ENCODE measurements at regions of chr10 and their contacts with region 1.

Region 1: GRCh38 chr10:63629363-63630084 is 108.3 kb downstream of the REEP3 start:
- DNase-seq: peak; percentile 72
- H3K4me3 Mint-ChIP-seq: peak overlapping the region; percentile 90
- H3K27ac Mint-ChIP-seq: peak overlapping the region; percentile 92
- H3K4me1 Mint-ChIP-seq: peaks cover 40% of the 10 kb centered on the region
- H3K27me3 Mint-ChIP-seq: peaks cover 6% of the 10 kb centered on the region

Region 2: GRCh38 chr10:63217120-63217605 is 412.4 kb before region 1 on chr10:
- intact Hi-C with region 1: loop called (anchors 1 kb)
- DNase-seq: no peak
- H3K4me3 Mint-ChIP-seq: no peak overlapping the region
- H3K27ac Mint-ChIP-seq: no peak overlapping the region
- H3K4me1 Mint-ChIP-seq: peaks cover 39% of the 10 kb centered on the region
- H3K27me3 Mint-ChIP-seq: no peaks in the 10 kb centered on the region

Region 3: GRCh38 chr10:63388421-63389031 is 241.0 kb before region 1 on chr10:
- intact Hi-C with region 1: loop called (anchors 10 kb)
- DNase-seq: no peak
- H3K4me3 Mint-ChIP-seq: peak overlapping the region; percentile 61
- H3K27ac Mint-ChIP-seq: peak overlapping the region; percentile 45
- H3K4me1 Mint-ChIP-seq: peaks cover 42% of the 10 kb centered on the region
- H3K27me3 Mint-ChIP-seq: peaks cover 2% of the 10 kb centered on the region

Region 4: DNA sequence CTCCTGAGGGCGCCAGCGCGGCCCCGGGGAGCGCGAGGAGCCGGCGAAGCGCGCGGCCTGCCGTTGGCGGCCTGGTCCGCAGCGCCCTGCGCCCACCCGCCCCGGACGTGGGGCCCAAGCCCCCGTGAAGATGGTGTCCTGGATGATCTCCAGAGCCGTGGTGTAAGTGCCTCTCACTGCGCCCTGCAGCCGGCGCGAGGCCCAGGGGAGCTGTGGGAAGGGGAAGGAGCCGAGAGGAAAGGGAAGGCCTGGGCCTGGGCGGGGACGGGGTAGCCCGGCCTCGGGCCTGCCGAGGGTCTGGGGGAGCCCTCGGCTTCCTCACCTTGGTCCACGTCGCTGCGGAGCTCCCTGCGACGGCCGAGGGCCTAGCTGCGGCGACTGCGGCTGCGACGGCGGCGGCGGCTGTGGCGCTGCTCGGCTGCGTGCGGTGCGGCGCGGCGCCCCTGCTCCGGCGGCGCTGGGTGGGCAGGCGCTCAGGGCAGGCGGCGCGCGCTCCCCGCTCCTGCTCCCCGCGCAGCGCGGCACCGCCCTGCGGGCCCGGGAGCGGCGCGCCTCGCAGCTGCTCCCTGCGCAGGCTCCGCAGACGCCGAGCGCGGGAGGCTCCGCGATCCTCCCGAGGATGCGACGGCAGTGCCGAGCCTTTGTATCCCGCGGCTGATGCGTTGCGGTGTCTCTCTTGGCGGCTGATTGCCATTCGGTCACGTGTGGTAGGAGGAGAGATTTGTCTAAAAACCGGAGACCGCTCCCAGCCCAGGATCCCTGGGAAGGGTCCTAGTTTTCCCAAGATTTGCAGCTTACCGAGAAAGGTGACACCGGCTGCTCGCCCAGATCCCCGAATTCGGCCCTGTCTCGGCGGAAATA is 107.9 kb before region 1 on chr10:
- intact Hi-C with region 1: loop called (anchors 2 kb)
- DNase-seq: peak; percentile 42
- H3K4me3 Mint-ChIP-seq: peak overlapping the region; percentile 79
- H3K27ac Mint-ChIP-seq: peak overlapping the region; percentile 81
- H3K4me1 Mint-ChIP-seq: peaks cover 51% of the 10 kb centered on the region
- H3K27me3 Mint-ChIP-seq: no peaks in the 10 kb centered on the region

Region 5: GRCh38 chr10:63707254-63707910 is 77.9 kb after region 1 on chr10:
- intact Hi-C with region 1: loop called (anchors 2 kb)
- DNase-seq: no peak
- H3K4me3 Mint-ChIP-seq: no peak overlapping the region
- H3K27ac Mint-ChIP-seq: peak overlapping the region; percentile 37
- H3K4me1 Mint-ChIP-seq: peaks cover 26% of the 10 kb centered on the region
- H3K27me3 Mint-ChIP-seq: peaks cover 2% of the 10 kb centered on the region

Region 6: GRCh38 chr10:63788152-63788821 is 158.8 kb after region 1 on chr10:
- intact Hi-C with region 1: no loop called
- DNase-seq: no peak
- H3K4me3 Mint-ChIP-seq: no peak overlapping the region
- H3K27ac Mint-ChIP-seq: no peak overlapping the region
- H3K4me1 Mint-ChIP-seq: peaks cover 3% of the 10 kb centered on the region
- H3K27me3 Mint-ChIP-seq: peaks cover 10% of the 10 kb centered on the region

Measured in activated T-helper 2 cell treated with anti-CD3 and anti-CD28 coated beads, Interferon-gamma antibody, Interleukin-2, Interleukin-4, amounts not matched to agents 10 μg/mL and 5 μg/mL and 100 μg/mL, durations not matched to agents 14 hours and 24 hours and 36 hours (primary cell).